Vagina (tissue), 2 donors: ENCODE measurements at regions of chr12 and their contacts with region 1.

Region 1: GRCh38 chr12:12024911-12025682 is 45.6 kb upstream of the BCL2L14 start:
- DNase-seq: peak in 1 of 2 donors; percentile 62
- H3K4me3 ChIP-seq: no peak overlapping the region
- H3K27ac ChIP-seq: no peak overlapping the region
- H3K4me1 ChIP-seq: no peaks in the 10 kb centered on the region
- H3K27me3 ChIP-seq: no peaks in the 10 kb centered on the region
- CTCF ChIP-seq: no peak
- POLR2A ChIP-seq: no peak

Region 2: GRCh38 chr12:11592484-11592883 is 432.6 kb before region 1 on chr12:
- intact Hi-C with region 1: loop called (anchors 5 kb)
- DNase-seq: no peak
- H3K4me3 ChIP-seq: no peak overlapping the region
- H3K27ac ChIP-seq: no peak overlapping the region
- H3K4me1 ChIP-seq: no peaks in the 10 kb centered on the region
- H3K27me3 ChIP-seq: no peaks in the 10 kb centered on the region
- CTCF ChIP-seq: no peak
- POLR2A ChIP-seq: no peak

Region 3: GRCh38 chr12:12266873-12267741 is 242.0 kb after region 1 on chr12 and contains the start of gene LRP6:
- intact Hi-C with region 1: no loop called
- DNase-seq: peak in 1 of 2 donors; percentile 90
- H3K4me3 ChIP-seq: peak within 1 kb of the TSS; percentile 68 to 96
- H3K27ac ChIP-seq: peak within 1 kb of the TSS; percentile 95
- H3K4me1 ChIP-seq: peaks cover 33% of the 10 kb centered on the region
- H3K27me3 ChIP-seq: no peaks in the 10 kb centered on the region
- CTCF ChIP-seq: no peak
- POLR2A ChIP-seq: peak in 1 of 2 donors; percentile 65
- total RNA-seq, gene LRP6: 71.0 TPM